A673 (cell line): ENCODE measurements at regions of chr17 and their contacts with region 1.

Region 1: GRCh38 chr17:4547971-4548461 is 7.2 kb downstream of the MYBBP1A start:
- DNase-seq: no peak
- H3K4me3 ChIP-seq: no peak overlapping the region
- H3K27ac ChIP-seq: no peak overlapping the region
- H3K4me1 ChIP-seq: no peaks in the 10 kb centered on the region
- H3K27me3 ChIP-seq: no peaks in the 10 kb centered on the region
- CTCF ChIP-seq: no peak

Region 2: DNA sequence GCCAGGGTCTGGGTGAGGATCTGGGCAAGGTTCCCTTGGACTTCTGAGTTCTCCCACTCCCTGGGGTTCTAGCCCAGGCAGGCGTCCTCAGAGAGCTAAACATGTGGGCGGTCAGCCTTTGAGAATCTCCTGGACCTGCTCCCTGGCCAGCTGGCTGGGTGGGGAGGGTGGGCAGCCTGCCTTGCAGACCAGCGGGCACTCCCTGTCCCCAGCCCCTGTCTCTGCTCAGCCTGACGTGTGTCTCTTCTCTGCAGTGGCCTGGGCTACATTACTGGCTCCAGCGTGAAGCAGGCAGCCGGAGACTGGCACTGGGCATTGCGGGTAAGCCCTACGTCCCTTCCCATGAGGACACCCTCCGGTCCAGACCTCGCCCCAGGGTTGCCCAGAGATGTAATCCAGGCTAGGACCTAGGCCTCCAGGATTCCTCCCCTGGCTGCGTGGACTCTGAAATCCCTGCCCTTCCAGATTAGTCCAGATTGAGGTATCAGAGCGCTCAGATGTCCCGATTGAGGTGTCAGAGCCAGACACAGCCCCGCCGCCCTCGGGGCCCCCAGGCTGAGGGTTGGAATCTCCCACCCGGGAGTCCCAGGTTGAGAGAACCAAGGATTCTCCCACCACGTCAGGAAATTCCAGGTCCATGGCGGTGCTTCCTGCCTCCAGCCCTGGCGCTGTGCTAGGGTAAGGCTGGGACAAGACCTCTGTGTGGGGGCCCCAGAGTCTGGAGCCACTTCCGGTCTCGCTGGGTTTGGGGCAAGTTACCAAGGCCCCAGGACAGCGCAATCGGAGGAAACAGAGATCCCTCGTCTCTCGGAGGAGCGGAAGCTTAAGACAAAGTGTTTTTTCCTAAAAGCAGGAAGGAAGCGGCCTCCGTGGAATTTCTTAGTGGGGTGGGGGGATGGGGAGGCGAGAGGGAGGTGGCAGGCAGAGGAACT is 17.0 kb before region 1 on chr17:
- CTCF ChIA-PET with region 1: no interaction called
- POLR2A ChIA-PET with region 1: interaction called, 13 read pairs
- intact Hi-C with region 1: no loop called
- DNase-seq: no peak
- H3K4me3 ChIP-seq: no peak overlapping the region
- H3K27ac ChIP-seq: no peak overlapping the region
- H3K4me1 ChIP-seq: peaks cover 4% of the 10 kb centered on the region
- H3K27me3 ChIP-seq: no peaks in the 10 kb centered on the region
- CTCF ChIP-seq: no peak